Cardiac septum (tissue), 1 donor: ENCODE measurements at regions of chr1 and their contacts with region 1.

Region 1: DNA sequence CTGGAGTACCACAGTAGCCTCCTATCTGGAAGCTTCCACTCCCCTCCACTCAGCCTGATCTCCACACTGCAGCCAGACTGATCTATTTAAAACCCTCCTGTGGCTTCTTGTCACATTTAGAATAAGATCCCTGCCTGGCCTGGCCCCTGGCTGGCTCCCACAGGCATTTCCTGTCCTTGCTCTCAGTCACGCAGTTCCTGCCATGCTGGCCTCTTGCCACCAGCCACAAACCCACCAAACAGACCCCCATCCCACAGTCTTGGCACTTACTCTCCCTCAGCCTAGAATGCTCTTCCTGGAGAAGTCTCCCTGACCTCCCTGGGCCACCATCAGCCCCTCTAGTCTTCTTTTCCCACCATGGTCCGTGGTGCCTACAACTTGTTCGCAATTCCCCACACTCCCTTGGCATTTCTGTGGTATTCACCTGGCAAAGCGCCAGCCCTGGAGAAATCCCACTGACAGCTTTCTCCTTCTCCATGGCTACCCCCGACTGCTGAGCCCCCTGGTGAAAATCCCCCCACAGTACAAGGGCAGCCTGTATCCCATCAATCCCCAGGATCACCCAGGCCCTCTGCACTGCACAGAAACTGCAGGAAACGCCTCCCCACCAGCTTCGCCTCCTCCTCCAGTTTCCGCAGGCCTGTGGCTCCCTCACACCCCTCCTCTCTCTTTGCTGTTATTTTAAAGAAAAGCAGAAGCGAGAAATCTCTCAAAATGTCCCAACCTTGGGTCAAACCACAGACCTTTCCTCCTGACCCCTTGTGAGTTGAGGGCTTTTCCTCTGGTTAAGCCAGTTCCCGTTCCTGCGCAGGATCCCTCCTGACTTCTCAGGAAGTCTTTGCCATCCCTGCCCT is 94.5 kb downstream of the SYT2 start:
- DNase-seq: no peak

Region 2: DNA sequence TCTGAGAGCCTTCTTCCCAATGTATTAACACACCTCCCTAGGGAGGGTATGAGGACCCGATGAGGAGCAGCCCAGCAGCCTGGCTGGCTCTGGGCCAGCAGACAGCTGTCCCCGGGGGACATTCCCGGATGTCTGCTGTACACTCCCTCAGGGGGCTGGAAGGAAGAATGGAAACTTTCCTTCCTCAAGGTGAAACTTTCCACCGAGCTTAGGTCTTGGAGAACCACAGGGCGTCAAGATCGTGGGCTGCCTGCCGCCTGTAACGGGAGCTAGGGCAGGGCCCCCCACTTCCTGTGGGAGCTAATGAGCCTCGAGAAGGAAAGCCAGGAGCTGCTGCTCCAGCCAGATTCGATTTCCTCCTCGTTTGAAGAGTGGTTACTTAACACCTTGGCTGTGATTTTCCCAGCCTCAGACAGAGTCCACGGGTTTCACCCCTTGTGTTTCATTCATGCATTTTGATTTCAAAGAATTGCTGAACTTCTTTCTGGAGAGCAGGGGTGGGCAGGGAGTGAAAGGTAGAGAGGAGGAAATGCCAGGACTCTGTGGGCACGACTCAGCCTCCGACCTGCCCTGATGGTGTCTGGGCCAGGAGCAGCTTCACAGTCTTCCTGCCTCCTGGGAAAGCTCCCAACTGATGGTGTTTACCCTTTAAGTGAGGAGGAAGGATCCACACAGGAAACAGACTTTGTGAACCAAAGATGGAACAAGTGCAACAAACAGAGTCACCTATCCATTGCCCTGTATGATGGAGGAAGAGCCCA is 303.7 kb before region 1 on chr1:
- intact Hi-C with region 1: no loop called
- DNase-seq: no peak

Region 3: DNA sequence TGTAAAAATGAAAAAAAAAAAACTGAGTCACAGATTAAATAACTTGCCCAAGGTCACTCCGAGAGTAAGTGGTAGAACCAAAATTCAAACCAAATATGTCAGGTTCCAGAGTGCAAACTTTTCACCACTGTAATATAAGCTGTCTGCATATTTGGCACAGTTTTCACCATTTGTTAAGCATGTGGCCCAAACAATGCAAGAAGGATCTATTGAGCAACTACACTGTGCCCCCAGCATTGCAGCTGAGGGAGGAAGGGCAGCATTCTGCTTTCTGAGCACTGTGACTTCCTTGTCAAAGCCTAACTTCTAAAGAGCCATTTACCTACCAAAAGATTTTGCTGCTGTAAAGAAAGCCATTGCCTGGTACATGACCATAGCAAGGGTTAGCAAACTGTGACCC is 38.9 kb before region 1 on chr1:
- intact Hi-C with region 1: loop called (anchors 5 kb)
- DNase-seq: no peak

Region 4: DNA sequence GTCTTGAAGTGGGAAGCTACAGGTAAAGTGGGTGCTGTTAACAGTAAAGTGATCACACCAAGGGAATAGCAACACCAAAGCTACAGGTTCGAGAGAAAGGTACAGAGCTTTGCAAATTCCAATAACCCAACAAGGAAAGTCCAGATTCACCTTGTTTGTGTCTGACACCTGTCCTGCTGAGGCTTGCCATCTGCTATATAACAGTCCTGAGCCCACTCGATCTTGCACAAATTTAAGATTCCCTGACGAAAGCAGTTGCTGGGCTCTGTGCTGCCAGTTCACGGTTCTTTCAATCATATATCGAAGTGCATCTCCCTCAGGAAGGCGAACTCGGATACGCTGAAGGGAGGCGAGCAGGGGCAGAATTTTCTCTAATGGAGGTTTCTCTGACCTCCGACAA is 117.5 kb after region 1 on chr1:
- intact Hi-C with region 1: no loop called
- DNase-seq: no peak

Region 5: GRCh38 chr1:203046984-203047630 is 431.4 kb after region 1 on chr1:
- intact Hi-C with region 1: no loop called
- DNase-seq: no peak